ENCODE measurements at regions of chr4 and their contacts with region 1.

Region 1: DNA sequence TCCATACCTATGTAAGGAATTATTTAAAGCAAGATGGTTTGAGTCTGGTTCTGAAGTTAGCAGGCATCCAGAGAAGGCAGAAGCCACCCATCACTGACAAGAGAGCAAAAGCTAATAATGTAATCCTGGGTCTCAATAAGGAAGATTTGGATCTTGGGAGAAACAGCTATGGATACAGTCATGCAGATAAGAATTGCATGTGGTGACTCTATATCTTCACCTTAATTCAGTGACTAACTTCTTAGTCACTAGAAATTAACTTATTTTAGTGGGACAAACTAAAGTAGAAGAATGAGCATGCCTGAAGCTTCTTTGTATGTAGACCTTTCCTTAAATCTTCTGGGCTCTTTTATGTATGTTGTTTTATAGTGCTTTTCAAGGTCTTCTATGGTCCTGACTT is 66.6 kb downstream of the ATP10D start:
- DNase-seq: no peak
- H3K4me3 ChIP-seq: no peak overlapping the region
- H3K27ac ChIP-seq: no peak overlapping the region
- H3K4me1 ChIP-seq: no peaks in the 10 kb centered on the region
- H3K27me3 ChIP-seq: no peaks in the 10 kb centered on the region
- CTCF ChIP-seq: no peak
- POLR2A ChIP-seq: no peak

Region 2: GRCh38 chr4:47538495-47539154 is 13.1 kb before region 1 on chr4:
- intact Hi-C with region 1: loop called (anchors 1 kb)
- DNase-seq: no peak
- H3K4me3 ChIP-seq: no peak overlapping the region
- H3K27ac ChIP-seq: no peak overlapping the region
- H3K4me1 ChIP-seq: no peaks in the 10 kb centered on the region
- H3K27me3 ChIP-seq: no peaks in the 10 kb centered on the region
- CTCF ChIP-seq: no peak
- POLR2A ChIP-seq: no peak

Region 3: GRCh38 chr4:48739560-48740019 is 1187.9 kb after region 1 on chr4:
- intact Hi-C with region 1: loop called (anchors 10 kb)
- DNase-seq: no peak
- H3K4me3 ChIP-seq: no peak overlapping the region
- H3K27ac ChIP-seq: no peak overlapping the region
- H3K4me1 ChIP-seq: no peaks in the 10 kb centered on the region
- H3K27me3 ChIP-seq: no peaks in the 10 kb centered on the region
- CTCF ChIP-seq: no peak
- POLR2A ChIP-seq: no peak

Measured in breast epithelium (tissue), 4 donors.